Right ventricle myocardium superior (tissue), 1 donor: ENCODE measurements at regions of chr17 and their contacts with region 1.

Region 1: GRCh38 chr17:49997791-49998703 is 3.0 kb upstream of the DLX3 start:
- DNase-seq: peak; percentile 69
- ATAC-seq: peak; percentile 76

Region 2: DNA sequence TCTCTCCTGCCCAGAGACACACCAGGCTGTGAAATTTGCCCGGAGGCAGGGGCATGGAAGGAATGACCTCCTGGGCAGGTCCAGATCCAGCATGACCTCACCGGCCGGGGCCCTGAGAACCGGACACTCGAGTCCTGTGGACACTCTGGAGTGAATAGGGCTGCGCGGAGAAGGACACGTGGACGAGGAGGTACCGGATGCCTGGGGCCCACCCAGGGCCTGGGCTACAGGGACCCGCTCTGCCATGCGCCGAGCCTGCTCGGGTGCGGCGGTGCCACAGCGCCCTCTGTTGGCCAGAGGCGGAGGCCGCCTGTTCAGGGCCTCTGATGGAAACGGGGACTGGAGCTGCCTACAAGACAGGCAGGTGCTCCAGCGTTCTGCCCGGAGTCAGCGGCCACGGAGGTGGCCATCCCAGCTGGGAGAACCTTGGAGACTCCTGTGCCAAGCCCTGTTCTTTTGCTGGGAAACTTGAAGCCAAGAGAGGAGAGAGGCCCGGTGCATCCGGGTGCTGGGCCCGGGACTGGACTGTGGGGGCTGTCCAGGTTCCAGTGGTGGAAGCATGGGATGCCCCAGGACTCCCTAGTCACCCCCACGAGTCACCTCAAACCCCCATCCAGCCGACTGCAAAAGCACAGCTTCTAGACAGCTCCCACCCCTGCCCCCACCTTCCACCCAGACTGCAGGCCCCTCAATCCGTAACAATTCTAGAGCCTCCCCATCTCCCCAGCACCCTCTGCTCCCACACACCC is 441.6 kb before region 1 on chr17:
- intact Hi-C with region 1: loop called (anchors 2 kb)
- DNase-seq: peak; percentile 87
- ATAC-seq: peak; percentile 95

Region 3: DNA sequence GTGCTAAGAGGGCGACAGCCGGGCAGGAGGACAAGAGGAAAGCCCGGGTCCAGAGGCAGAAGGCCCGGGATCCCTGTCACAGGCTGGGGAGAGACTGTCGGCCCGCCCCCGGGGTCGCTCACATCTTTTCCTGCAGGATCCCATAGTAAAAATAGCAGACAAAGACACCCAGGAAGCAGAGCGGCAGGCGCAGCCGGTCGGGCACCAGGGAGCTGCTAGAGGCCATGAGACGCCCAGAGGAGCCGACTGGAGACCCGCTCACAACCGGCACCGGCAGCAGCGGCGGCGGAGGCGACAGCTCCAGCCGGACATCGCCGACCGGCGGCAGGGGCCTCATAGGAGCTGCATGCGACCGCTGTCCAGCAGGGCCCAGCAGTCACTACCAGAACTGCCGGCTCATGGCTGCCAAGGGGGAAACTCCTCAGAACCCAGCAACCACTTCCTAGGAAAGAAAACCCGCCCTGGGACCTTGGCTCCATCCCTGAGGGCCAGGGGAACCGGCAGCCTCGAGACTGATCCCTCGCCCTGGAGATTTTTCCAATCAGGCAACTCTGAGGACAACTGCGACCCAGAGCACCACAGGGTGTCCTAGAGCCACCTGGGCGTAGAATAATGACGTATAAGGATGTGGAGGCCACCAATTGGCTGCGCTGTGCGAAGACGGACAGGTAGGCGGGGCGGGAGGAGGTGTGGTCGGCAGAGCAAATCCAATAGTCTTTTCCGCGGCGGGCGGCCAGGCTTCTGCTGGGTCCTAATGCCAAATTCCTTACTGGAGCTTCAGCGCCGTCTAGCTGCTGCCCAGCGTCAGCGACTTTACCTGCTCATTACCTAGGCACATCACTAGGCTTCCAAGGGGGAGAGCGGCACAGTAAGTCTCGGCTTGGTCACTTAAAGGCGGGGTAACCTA is 290.2 kb before region 1 on chr17 and contains the start of gene SLC35B1:
- intact Hi-C with region 1: loop called (anchors 10 kb)
- DNase-seq: peak; percentile 100
- ATAC-seq: peak; percentile 99
- total RNA-seq, gene SLC35B1: 53.3 TPM

Region 4: DNA sequence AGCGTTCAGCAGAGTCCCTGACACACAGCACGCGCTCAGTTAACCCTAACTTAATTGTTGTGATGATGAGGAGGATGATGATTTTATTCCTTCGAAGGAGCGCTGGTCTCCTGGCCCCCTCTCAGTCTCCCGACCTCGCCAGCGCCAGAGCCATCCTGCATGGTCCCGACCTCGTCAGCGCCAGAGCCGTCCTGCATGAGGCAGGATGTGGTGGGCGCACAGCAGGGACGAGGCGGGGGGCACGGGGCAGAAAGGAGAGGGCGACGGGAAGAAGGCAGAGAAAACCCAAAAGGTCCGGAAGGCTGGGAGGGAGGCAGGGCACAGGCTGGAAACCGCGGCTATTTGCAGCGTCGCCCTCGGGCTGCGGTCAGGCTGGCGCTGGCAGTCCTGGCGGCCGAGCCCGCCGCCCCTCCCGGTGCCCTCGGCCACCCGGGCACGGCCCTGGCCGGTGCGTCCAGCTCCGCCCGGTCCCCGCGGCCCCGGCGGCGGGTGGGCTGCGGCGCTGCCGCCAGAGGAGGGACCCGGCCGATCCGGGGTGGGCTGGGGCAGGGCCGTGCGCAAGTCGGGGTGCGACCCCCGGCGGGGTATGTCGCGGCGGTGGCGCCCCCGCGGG is 147.2 kb before region 1 on chr17:
- intact Hi-C with region 1: no loop called
- DNase-seq: no peak
- ATAC-seq: peak; percentile 52

Region 5: GRCh38 chr17:49861150-49861892 is 136.7 kb before region 1 on chr17:
- intact Hi-C with region 1: loop called (anchors 2 kb)
- DNase-seq: peak; percentile 47
- ATAC-seq: peak; percentile 49

Region 6: DNA sequence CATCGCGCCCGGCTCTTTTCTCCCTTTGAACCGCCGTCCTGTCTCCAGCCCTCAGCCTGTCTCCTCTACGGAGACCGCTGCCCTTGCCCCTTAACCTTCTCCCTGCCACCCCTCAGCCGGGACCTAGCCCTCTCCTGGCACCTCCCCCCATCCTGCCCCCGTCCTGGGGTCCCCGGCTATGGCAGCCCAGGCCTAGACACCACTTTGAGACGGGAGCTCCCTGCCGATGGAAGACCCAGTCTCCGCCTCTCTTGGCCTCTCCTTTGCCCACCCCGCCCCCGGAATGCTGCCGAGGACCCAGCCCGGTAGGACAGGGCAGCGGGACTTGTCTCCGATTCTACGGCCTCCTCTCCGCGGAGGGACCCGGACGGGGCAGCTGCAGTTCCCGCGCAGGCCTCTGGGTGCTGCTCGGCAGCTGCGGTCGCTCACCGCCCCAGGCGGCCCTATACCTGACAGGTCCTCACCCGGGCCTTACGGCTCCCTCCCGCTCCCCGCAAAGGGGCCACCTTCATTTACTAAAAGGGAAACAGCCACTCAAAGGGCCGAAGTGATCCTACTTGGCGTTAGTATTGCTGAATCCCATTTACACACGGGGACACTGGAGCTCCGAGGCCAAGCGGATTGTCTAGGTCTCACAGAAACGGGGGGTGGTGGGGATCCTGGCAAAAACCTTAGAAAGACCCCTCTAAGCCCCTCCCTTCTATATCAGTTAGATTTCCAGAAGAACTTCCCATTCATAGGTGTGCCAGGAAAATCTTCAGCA is 117.6 kb before region 1 on chr17:
- intact Hi-C with region 1: loop called (anchors 5 kb)
- DNase-seq: peak; percentile 83
- ATAC-seq: peak; percentile 98

Region 7: DNA sequence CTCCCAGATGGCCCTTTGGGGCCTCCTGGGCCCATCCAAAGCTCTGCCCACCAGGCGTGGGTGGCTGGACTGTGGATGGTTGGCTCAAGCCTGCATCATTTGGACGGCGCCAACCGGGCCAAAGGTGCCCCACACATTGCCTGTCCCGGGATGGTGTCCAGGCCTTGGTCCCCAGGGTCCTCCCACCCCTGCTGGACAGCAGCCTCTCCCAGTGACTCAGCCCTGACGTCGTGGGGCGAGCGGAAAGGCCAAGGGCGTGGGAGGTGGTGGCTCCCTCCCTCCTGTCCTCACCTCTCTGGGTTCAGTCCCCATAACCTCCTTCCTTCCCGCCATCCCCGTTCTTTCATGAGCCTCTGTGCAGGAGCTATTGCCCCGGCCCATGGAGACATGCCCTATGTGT is 71.2 kb before region 1 on chr17:
- intact Hi-C with region 1: no loop called
- DNase-seq: peak; percentile 83
- ATAC-seq: peak; percentile 80

Region 8: GRCh38 chr17:50575581-50576210 is 577.6 kb after region 1 on chr17:
- intact Hi-C with region 1: no loop called
- DNase-seq: no peak
- ATAC-seq: no peak